ENCODE measurements at regions of chr21 and their contacts with region 1.

Region 1: DNA sequence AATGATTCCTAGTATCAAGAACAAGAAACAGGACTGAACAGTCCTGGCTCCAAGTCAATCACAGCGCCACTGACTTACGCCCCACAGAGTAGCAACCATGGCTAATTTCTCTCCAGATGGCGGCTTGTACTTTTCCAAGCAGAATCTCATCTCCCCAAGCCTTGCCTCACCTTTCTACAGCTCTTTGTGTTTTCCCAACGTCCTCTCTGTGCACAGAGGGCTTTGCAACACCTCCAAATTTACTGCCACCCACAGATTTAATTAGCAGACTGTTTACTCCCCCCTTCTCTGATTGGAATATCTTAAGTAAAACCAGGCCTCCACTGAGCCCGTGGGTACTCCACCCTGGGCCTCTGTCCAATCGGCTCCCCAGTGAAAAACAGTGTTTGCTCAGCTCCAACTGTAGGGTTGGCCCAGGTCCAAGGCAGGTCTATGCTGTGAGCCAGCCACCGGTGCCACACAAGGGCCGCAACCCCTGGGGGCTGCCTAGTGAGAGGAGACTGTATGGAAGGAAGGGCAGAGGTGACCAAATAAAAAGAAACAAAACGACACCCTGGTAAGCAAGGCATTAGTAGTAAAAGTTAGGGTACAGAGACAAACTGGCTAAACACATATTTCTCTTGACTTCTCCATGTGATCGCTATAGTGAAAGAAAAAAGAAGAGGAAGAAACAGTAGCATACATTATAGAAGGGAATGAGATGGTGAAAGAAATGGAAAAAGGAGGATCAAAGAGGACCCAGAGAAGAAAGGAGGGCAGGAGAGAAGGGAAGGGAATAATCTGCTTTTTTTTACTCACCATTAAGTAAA is 128.4 kb upstream of the SOD1 start:
- DNase-seq: no peak
- H3K4me3 ChIP-seq: no peak overlapping the region
- H3K27ac ChIP-seq: no peak overlapping the region
- H3K4me1 ChIP-seq: peaks cover 18% of the 10 kb centered on the region
- H3K27me3 ChIP-seq: no peaks in the 10 kb centered on the region
- CTCF ChIP-seq: no peak

Region 2: DNA sequence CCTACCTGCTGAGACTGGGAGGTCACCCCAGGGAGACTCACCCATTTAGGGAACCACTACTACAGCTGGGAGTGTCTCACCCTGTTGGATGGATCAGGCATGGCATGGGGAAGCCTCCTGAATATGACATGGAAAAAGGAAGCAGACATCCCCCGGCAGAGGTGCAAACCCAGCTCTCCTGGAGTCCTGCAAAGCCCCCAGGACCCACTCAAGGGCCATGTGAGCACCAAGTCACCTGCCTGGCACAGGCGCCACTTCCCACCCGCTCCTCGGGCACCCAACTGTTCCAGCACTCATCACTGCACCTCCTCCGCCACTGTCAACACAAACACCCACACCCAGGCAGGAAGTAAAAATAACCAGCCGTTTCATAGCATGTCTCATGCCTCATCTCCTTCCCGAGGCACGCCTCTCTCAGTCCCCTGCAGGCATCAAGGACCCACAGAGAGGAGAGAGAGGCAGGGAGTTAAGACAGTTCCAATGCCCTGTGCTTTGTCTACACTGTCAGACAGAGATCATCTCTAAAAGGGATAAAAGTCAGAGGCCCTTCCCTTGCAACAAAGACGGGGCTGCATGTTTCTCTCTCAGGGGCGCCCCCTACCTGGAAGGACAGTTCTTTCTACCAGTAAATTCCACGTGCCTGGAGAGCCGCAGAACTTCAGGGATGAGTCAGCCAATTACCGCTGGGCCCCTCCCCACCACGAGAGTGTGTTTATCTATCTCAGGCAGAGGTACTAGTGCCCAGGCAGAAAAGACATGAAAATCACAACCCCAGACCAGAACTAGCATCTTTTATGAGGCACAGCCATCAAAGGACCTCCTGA is 21.7 kb before region 1 on chr21:
- CTCF ChIA-PET with region 1: interaction called, 12 read pairs
- POLR2A ChIA-PET with region 1: no interaction called
- intact Hi-C with region 1: no loop called
- DNase-seq: peak; percentile 65 to 73
- H3K4me3 ChIP-seq: no peak overlapping the region
- H3K27ac ChIP-seq: peak overlapping the region; percentile 50
- H3K4me1 ChIP-seq: peaks cover 28% of the 10 kb centered on the region
- H3K27me3 ChIP-seq: no peaks in the 10 kb centered on the region
- CTCF ChIP-seq: peak; percentile 77